Gastrocnemius medialis (tissue), 4 donors: ENCODE measurements at regions of chr6 and their contacts with region 1.

Region 1: DNA sequence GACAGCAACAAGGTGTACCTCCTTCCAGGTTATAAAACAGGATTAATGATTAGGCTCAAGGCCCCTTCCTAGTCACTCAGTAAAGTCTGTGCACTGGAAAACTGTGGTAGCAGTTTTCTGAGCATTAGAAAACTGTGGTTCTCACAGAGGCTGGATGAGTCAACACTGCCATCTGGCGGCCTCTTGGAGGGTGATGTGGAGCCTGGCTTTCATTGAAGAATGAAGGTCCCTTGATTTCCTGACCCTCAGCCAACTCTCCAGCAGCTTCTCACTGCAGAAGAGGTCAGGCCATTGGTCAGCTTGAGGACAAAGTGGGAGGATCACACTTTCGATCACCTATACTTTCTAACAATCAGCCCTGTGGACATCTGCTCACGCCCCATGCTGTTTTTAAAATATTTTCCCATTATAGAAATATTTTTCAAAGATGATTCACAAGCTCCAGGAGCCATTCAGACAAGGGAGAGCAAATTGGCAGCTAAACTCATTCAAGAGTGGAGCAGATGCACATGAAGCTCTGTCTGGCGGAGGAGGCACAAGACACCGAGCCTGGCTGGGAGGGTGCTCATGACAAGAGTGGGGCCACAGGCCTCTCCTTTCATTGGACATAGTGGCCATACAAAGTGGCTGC is 23.2 kb downstream of the PSMB1 start:
- DNase-seq: peak; percentile 60 to 78
- ATAC-seq: peak; percentile 78 to 82
- H3K4me3 ChIP-seq: no peak overlapping the region
- H3K27ac ChIP-seq: peak overlapping the region; percentile 21 to 47 (median 43)
- H3K4me1 ChIP-seq: peaks cover 16 to 18% of the 10 kb centered on the region in 2 donors
- H3K27me3 ChIP-seq: no peaks in the 10 kb centered on the region
- CTCF ChIP-seq: peak; percentile 71 to 92 (median 82)
- POLR2A ChIP-seq: no peak

Region 2: DNA sequence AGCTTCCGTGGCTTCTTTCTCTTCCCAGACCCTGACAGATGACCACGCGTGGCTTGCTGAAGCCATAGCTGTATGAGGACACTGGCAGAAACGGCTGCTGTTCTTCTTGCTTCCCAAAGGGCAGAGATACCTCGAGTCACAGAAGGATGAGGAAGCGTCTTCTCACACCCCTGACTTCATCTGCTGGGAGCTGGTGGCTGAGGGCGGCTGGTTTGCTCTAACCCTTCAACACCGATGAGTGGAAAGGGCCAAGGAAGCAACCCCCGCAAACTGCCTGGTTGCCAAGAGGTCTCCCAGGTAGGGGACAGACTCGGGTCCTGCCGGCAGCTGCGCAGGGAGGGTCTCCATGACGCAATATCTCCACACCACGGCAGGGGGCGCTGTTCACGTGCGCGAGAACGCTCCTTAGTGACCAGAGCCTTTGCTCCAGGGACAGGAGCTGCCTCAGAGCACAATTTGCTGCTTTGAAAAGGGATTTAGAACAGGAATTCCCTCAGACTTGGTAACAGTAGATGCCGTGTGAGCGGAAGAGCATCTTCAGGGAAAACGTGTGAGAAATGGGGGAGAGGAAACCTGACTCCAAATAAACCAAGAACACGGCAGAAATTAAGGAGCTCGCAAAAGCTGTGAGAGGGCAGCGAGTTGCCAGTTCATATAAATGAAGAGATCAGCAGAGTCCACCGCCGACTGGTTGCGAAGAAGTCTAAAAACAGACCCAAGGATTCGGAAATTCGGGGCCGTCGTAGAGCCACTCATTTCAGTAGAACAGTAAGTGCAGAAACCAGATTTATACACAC is 698.3 kb before region 1 on chr6:
- in situ Hi-C with region 1: loop called in 1 of 4 experiments (anchors 10 kb)
- intact Hi-C with region 1: loop called (anchors 2 kb)
- DNase-seq: peak; percentile 48 to 49
- ATAC-seq: peak; percentile 84 to 91
- H3K4me3 ChIP-seq: no peak overlapping the region
- H3K27ac ChIP-seq: no peak overlapping the region
- H3K4me1 ChIP-seq: no peaks in the 10 kb centered on the region
- H3K27me3 ChIP-seq: peaks cover 0 to 2% (median 0%) of the 10 kb centered on the region in 3 donors
- CTCF ChIP-seq: peak; percentile 85 to 94 (median 92)
- POLR2A ChIP-seq: no peak

Region 3: GRCh38 chr6:170247178-170247701 is 282.7 kb before region 1 on chr6:
- in situ Hi-C with region 1: no loop called
- intact Hi-C with region 1: no loop called
- DNase-seq: no peak
- ATAC-seq: no peak
- H3K4me3 ChIP-seq: no peak overlapping the region
- H3K27ac ChIP-seq: no peak overlapping the region
- H3K4me1 ChIP-seq: peaks cover 3% of the 10 kb centered on the region in 2 donors
- H3K27me3 ChIP-seq: peaks cover 12 to 26% (median 18%) of the 10 kb centered on the region in 3 donors
- CTCF ChIP-seq: no peak
- POLR2A ChIP-seq: no peak

Region 4: GRCh38 chr6:170316071-170316470 is 213.9 kb before region 1 on chr6:
- in situ Hi-C with region 1: loop called in 1 of 4 experiments (anchors 10 kb)
- intact Hi-C with region 1: no loop called
- DNase-seq: no peak
- ATAC-seq: no peak
- H3K4me3 ChIP-seq: no peak overlapping the region
- H3K27ac ChIP-seq: no peak overlapping the region
- H3K4me1 ChIP-seq: peaks cover 31 to 36% of the 10 kb centered on the region in 2 donors
- H3K27me3 ChIP-seq: no peaks in the 10 kb centered on the region
- CTCF ChIP-seq: no peak
- POLR2A ChIP-seq: no peak

Region 5: GRCh38 chr6:170371588-170371987 is 158.4 kb before region 1 on chr6:
- in situ Hi-C with region 1: no loop called
- intact Hi-C with region 1: loop called (anchors 5 kb)
- DNase-seq: peak; percentile 6 to 29
- ATAC-seq: no peak
- H3K4me3 ChIP-seq: no peak overlapping the region
- H3K27ac ChIP-seq: peak overlapping the region; percentile 73 to 80 (median 78)
- H3K4me1 ChIP-seq: peaks cover 43% of the 10 kb centered on the region in 2 donors
- H3K27me3 ChIP-seq: no peaks in the 10 kb centered on the region
- CTCF ChIP-seq: no peak
- POLR2A ChIP-seq: no peak